ENCODE measurements at regions of chr2 and their contacts with region 1.

Region 1: DNA sequence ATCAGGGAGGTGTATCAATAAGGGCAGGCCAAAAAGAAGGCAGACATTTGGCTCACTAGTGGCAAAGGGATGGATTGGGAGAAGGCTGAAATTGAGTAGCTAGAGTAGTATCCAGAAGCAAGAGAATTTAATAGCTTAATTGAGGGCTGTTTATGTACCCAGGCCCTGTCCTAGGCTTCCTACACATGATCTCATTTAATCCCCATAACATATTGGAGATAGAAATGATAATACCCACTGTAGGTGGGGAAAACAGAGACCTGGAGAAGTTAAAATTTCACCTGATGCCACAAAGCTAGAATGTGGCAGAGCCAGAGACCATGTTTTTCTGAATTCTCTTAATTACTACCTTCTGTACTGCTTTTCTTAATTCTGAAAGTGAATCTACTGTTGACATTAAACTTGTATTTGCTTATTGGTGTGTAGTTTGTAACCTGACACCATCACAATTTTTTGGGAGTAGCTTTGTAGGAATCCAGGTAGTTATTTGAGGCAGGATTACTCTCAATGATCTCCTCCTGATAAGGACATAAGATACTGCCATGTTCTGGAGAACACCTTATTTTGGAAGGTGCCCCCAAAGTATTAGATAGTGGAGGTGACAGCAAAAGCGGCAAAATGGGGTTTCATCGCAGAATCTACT is 42.2 kb downstream of the RAB10 start:
- H3K4me3 ChIP-seq: no peak overlapping the region
- H3K27ac ChIP-seq: no peak overlapping the region
- H3K4me1 ChIP-seq: peaks cover 18% of the 10 kb centered on the region
- CTCF ChIP-seq: no peak

Region 2: DNA sequence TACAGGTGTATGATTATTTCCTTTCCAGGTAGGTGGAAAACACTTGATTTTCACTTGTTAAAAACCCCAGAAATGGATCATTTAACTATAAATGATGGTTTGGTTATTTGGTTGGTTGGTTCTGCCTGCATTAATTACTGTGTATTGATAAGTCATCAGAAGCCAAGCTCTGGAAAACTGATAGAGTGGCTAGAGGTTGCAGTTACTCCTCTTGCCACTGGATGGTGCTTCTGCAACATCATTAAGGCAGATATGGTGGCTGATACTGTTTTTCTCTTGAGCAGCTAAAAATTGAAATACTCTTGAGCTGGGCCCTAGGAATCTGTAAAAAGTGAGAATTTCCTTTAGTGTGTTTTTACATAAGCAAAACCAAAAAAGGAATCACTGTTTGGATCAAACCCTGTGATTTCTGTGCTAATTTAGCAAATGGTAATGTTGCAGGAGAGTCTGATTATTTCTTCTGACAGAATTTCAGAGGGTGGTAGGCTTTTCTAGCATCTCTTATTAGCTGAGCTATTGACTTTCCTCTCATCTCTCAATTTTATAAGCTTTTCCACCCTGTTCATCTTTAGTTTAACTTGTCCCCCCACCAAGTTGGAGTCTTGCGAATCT is 12.1 kb after region 1 on chr2:
- CTCF ChIA-PET with region 1: interaction called, 10 read pairs
- POLR2A ChIA-PET with region 1: no interaction called
- H3K4me3 ChIP-seq: no peak overlapping the region
- H3K27ac ChIP-seq: no peak overlapping the region
- H3K4me1 ChIP-seq: no peaks in the 10 kb centered on the region; the same call in 1 of the 2 replicates
- CTCF ChIP-seq: peak; percentile 43; the same call in 1 of the 2 replicates

Region 3: DNA sequence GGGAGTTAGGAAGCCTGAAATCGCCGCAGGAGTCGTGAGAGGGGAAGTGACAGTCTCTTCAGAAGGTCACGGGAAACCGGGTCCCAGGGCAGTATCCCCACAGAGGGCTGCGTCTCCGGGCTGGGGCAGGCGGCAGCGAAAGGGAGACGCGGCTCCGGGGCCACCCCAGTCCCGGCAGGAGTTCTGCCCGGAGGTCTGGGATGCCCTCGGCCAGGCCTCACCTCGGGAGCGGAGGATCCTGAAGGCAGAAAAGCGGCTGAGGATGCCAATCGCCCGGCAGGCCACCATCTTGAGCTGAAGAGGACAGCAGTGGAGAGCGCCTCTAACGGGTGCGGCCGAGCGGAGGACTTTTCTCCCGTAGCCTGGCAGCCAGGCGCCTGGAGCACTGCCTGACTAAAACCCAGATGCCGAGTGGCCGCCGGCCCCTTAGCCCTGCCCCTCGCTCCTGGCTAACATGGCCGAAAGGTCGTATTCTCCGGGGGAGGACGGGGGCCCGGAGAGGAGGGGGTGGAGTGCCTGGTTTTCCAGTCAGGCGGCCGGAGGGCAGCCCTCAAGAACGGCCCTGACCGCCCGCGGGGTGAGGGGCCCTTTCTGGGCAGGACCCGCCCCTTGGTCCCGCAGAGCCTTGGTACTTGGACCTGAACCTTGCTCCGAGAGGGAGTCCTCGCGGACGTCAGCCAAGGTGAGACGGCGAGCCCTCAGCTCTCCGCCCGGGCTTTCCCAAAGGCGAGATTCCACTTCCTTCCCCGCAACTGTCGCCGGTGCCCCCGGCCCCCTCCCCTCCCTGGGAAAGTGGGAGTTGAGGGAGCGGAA is 168.4 kb after region 1 on chr2 and contains the starts of genes HADHA and HADHB:
- CTCF ChIA-PET with region 1: no interaction called
- POLR2A ChIA-PET with region 1: no interaction called
- H3K4me3 ChIP-seq: peak within 1 kb of the TSS; percentile 91
- H3K27ac ChIP-seq: peak within 1 kb of the TSS; percentile 97
- H3K4me1 ChIP-seq: peaks cover 2% of the 10 kb centered on the region; the same call in 1 of the 2 replicates
- CTCF ChIP-seq: peak; percentile 86

Region 4: GRCh38 chr2:26363323-26363722 is 287.2 kb after region 1 on chr2:
- CTCF ChIA-PET with region 1: no interaction called
- POLR2A ChIA-PET with region 1: no interaction called
- H3K4me3 ChIP-seq: no peak overlapping the region
- H3K27ac ChIP-seq: no peak overlapping the region
- H3K4me1 ChIP-seq: no peaks in the 10 kb centered on the region
- CTCF ChIP-seq: no peak

Measured in HEK293 (cell line).